Activated B cell treated with CpG ODN at 0.5 μM for 24 hours (primary cell): ENCODE measurements at regions of chr19 and their contacts with region 1.

Region 1: DNA sequence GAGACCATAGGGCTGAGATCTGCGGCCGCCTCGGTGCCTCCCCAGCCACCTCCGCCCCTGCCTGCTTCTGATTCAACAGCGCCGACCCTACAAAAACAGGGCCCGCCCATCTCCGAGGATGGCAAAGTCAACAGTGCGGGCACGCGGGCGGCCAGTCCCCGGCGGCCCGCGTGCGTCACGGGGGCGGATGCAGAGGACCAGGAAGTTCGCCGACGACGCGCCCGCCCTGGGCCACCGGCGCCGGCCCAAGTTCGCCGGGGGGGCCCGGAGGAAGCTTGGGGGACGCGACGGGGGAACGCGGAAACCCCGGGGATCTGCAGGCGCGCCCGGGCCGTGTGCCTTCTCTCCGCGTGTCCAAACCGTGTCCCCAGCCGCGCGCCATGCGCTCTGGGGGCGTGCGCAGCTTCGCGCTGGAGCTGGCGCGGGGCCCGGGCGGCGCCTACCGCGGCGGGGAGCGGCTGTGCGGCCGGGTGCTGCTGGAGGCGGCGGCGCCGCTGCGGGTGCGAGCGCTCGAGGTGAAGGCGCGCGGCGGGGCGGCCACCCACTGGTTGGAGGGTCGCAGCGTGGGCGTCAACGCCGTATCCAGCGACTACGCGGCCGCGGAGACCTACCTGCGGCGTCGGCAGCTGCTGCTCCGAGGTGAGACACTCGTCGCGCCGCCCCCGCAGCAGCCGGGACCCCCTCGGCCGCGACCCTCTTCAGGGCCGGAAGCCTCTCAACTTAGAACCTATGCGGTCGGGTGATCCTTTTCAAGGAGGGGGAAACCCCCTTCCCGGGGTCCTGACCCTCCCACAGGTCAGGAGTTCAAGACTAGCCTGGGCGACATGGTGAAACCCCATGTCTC is 6.8 kb upstream of the ARRDC2 start:
- DNase-seq: peak; percentile 92
- ATAC-seq: peak; percentile 82
- H3K4me3 Mint-ChIP-seq: peak overlapping the region; percentile 92
- H3K27ac Mint-ChIP-seq: peak overlapping the region; percentile 96
- H3K4me1 Mint-ChIP-seq: peaks cover 37% of the 10 kb centered on the region
- H3K27me3 Mint-ChIP-seq: no peaks in the 10 kb centered on the region
- CTCF ChIP-seq: no peak

Region 2: GRCh38 chr19:17932485-17933338 is 68.4 kb before region 1 on chr19 and contains the start of gene CCDC124:
- CTCF ChIA-PET with region 1: interaction called, 227 read pairs
- POLR2A ChIA-PET with region 1: interaction called, 39 read pairs
- intact Hi-C with region 1: no loop called
- DNase-seq: peak; percentile 87
- ATAC-seq: peak; percentile 96
- H3K4me3 Mint-ChIP-seq: peak within 1 kb of the TSS; percentile 88
- H3K27ac Mint-ChIP-seq: peak within 1 kb of the TSS; percentile 94
- H3K4me1 Mint-ChIP-seq: peaks cover 25% of the 10 kb centered on the region
- H3K27me3 Mint-ChIP-seq: no peaks in the 10 kb centered on the region
- CTCF ChIP-seq: no peak
- total RNA-seq, gene CCDC124: 49.9 and 59.5 TPM in 2 replicates

Region 3: DNA sequence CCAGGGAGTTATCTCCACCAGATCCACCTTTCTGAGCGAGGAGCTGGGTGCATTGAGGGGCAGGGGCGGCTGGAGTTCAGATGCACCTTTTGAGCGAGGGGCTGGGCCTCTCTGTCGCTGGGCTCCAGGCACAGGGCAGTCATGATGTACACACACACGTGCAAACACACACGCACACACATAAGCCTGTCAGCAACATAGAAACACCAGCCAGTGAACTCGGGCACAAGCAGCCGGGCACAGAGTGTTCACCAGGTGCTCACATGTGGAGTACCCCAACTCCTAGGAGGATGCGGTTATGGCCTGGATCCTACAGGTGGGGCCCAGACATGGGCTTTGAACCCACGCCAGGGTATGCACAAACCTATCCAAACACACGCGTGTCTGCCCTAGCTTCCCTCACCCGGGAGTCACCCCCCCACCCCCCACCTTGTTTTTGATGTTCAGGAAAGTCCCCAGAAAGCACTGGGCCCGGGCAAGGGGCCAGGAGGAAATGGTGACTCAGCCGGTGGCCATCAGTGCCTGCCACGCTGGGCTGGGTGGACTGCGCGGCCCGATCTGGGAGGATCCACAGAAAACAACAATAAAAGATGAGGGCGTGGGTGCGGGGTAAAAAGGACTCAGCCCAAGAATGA is 20.1 kb after region 1 on chr19:
- CTCF ChIA-PET with region 1: no interaction called
- POLR2A ChIA-PET with region 1: interaction called, 63 read pairs
- intact Hi-C with region 1: no loop called
- DNase-seq: peak; percentile 68
- ATAC-seq: peak; percentile 23
- H3K4me3 Mint-ChIP-seq: peak overlapping the region; percentile 69
- H3K27ac Mint-ChIP-seq: peak overlapping the region; percentile 97
- H3K4me1 Mint-ChIP-seq: peaks cover 80% of the 10 kb centered on the region
- H3K27me3 Mint-ChIP-seq: no peaks in the 10 kb centered on the region
- CTCF ChIP-seq: no peak

Region 4: DNA sequence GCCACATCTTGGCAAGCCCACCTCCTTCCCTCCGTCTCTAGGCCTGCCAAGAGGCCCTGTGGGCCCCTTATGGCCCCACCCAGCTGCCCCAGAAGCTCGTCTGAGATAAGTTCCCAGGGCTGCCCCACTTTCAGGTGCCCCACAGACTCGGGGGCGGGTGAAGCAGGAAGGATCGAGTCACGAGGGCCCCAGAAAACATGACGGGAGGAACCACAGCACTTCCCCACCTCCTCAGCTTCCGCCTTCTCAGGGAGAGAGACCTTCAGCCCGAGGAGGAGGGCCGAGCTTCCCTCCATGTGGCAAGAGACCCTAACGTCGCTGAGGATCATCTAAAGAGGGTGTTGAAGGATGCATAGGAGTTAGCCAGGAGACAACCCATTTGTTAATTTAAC is 90.1 kb after region 1 on chr19:
- CTCF ChIA-PET with region 1: no interaction called
- POLR2A ChIA-PET with region 1: interaction called, 14 read pairs
- intact Hi-C with region 1: no loop called
- DNase-seq: peak; percentile 58
- ATAC-seq: peak; percentile 68
- H3K4me3 Mint-ChIP-seq: peak overlapping the region; percentile 67
- H3K27ac Mint-ChIP-seq: peak overlapping the region; percentile 97
- H3K4me1 Mint-ChIP-seq: peaks cover 60% of the 10 kb centered on the region
- H3K27me3 Mint-ChIP-seq: no peaks in the 10 kb centered on the region
- CTCF ChIP-seq: no peak

Region 5: DNA sequence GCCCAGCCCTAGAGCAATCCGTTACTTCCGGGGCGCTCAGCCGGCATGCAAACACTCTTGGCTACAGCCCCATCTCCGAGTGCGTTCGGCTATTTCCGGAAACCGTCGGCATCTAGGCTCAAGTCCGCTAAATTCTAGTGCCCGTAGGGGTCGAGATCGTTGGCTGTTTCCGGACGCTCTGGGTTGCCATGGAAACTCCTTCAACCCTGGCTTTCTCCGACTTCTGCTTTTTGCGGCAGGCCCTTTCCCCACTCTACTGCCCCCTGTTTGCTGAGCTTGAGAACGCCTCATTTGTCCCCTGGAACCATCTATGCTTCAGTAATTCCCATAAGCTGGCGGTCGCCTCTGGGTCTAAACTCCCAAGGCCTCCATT is 151.3 kb after region 1 on chr19:
- CTCF ChIA-PET with region 1: no interaction called
- POLR2A ChIA-PET with region 1: interaction called, 10 read pairs
- intact Hi-C with region 1: loop called (anchors 1 kb)
- DNase-seq: peak; percentile 97
- ATAC-seq: peak; percentile 70
- H3K4me3 Mint-ChIP-seq: peak overlapping the region; percentile 89
- H3K27ac Mint-ChIP-seq: peak overlapping the region; percentile 94
- H3K4me1 Mint-ChIP-seq: peaks cover 22% of the 10 kb centered on the region
- H3K27me3 Mint-ChIP-seq: no peaks in the 10 kb centered on the region
- CTCF ChIP-seq: no peak